Naive thymus-derived CD8-positive, alpha-beta T cell (primary cell): ENCODE measurements at regions of chr5 and their contacts with region 1.

Region 1: GRCh38 chr5:172065501-172065990 is 59.1 kb upstream of the FBXW11 start:
- DNase-seq: no peak
- ATAC-seq: no peak
- H3K4me3 Mint-ChIP-seq: peak overlapping the region in 9 of 10 donors; percentile 8 to 88 (median 77)
- H3K27ac Mint-ChIP-seq: peak overlapping the region; percentile 92 to 99 (median 96)
- H3K4me1 Mint-ChIP-seq: peaks cover 38 to 76% (median 73%) of the 10 kb centered on the region in 4 donors
- H3K27me3 Mint-ChIP-seq: no peaks in the 10 kb centered on the region

Region 2: GRCh38 chr5:171946000-171946774 is 119.4 kb before region 1 on chr5:
- POLR2A ChIA-PET with region 1: no interaction called
- DNase-seq: no peak
- ATAC-seq: no peak
- H3K4me3 Mint-ChIP-seq: no peak overlapping the region
- H3K27ac Mint-ChIP-seq: peak overlapping the region in 3 of 10 donors; percentile 10 to 41 (median 29)
- H3K4me1 Mint-ChIP-seq: peaks cover 19 to 60% (median 49%) of the 10 kb centered on the region in 4 donors
- H3K27me3 Mint-ChIP-seq: no peaks in the 10 kb centered on the region

Region 3: GRCh38 chr5:171984748-171985419 is 80.7 kb before region 1 on chr5:
- POLR2A ChIA-PET with region 1: no interaction called
- DNase-seq: peak in 3 of 10 donors; percentile 26 to 52 (median 30)
- ATAC-seq: peak; percentile 58 to 88
- H3K4me3 Mint-ChIP-seq: peak overlapping the region in 4 of 10 donors; percentile 3 to 29 (median 12)
- H3K27ac Mint-ChIP-seq: peak overlapping the region in 8 of 10 donors; percentile 3 to 50 (median 21)
- H3K4me1 Mint-ChIP-seq: peaks cover 19 to 63% (median 46%) of the 10 kb centered on the region in 4 donors
- H3K27me3 Mint-ChIP-seq: no peaks in the 10 kb centered on the region

Region 4: GRCh38 chr5:172052450-172053236 is 12.9 kb before region 1 on chr5:
- POLR2A ChIA-PET with region 1: interaction called, 36 read pairs
- DNase-seq: no peak
- ATAC-seq: no peak
- H3K4me3 Mint-ChIP-seq: no peak overlapping the region
- H3K27ac Mint-ChIP-seq: peak overlapping the region in 7 of 10 donors; percentile 19 to 63 (median 40)
- H3K4me1 Mint-ChIP-seq: peaks cover 15 to 32% (median 25%) of the 10 kb centered on the region in 4 donors
- H3K27me3 Mint-ChIP-seq: no peaks in the 10 kb centered on the region

Region 5: DNA sequence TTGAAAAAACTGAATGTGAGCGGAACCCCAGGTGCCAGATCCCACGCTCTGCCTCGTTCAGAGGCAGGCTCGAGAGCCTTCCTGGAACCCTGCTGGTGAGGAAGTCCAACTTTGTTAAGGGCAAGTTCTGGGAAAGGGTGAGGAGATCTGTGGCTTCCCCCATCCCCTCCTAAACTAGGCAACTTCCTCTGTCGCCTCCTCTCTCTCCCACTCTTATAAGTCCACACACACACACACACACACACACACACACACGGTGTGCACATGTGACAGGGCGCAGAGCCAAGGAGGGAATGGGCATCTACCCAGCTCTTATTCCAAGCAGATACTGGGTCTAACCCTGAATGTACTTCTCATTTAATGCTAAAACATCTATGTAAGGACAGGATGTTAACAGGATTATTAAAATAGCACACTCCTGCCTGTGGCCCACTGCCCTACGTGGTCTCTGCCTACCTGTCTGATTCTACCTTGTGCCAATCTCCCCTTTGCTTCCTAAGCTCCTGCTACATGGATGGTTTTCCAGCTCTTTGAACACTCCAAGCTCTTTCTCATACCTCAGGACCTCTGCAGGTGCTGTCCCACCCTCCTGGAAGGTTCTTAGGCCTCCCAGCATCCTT is 13.3 kb after region 1 on chr5:
- POLR2A ChIA-PET with region 1: interaction called, 18 read pairs
- DNase-seq: no peak
- ATAC-seq: peak; percentile 23 to 24
- H3K4me3 Mint-ChIP-seq: peak overlapping the region in 5 of 10 donors; percentile 2 to 68 (median 44)
- H3K27ac Mint-ChIP-seq: peak overlapping the region; percentile 58 to 95 (median 85)
- H3K4me1 Mint-ChIP-seq: peaks cover 17 to 25% (median 19%) of the 10 kb centered on the region in 4 donors
- H3K27me3 Mint-ChIP-seq: no peaks in the 10 kb centered on the region